Activated CD4-positive, alpha-beta memory T cell treated with anti-CD3 and anti-CD28 coated beads for 36 hours (primary cell): ENCODE measurements at regions of chr20 and their contacts with region 1.

Region 1: DNA sequence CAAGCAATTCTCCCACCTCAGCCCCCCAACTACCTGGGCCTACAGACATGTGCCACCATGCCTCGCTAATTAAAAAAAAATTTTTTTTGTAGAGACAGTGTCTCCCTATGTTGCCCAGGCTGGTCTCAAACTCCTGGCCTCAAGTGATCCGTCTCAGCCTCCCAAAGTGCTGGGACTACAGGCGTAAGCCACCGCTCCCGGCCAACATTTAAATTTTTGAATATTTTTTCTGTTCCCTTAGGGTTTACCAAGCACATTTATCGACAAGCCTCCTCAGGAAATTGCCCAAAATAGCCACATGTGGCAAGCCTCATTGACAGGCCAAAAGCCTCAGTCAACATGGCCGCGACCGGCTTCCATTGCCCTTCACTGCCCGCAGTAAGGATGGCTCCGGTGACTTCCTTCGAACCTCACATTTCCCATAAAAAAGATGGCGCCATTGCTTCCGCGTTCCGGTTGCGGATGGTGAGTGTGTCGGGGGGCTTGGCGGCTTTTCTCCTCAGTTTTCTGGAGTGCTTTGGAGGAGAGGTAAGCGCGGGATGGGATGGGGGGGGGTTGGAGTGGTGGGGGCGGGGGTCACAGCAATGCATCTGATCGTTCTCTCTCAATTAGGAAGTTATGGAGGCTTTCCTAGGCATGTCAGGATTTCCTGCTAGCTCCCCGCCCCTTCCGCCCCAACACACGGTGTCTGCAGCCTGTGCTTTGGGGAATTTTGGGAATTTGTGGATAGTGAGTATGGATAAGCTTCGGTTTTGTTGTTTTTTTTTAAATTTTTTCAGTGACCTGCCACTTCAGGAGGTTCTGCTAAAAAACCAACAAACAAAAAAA is at the start of gene SHLD1:
- DNase-seq: peak; percentile 88
- H3K4me3 Mint-ChIP-seq: peak within 1 kb of the TSS; percentile 90
- H3K27ac Mint-ChIP-seq: peak within 1 kb of the TSS; percentile 95
- H3K4me1 Mint-ChIP-seq: peaks cover 18% of the 10 kb centered on the region
- H3K27me3 Mint-ChIP-seq: no peaks in the 10 kb centered on the region
- total RNA-seq, gene SHLD1: 9.0 to 9.8 TPM

Region 2: GRCh38 chr20:5633751-5634365 is 116.3 kb before region 1 on chr20:
- CTCF ChIA-PET with region 1: no interaction called
- POLR2A ChIA-PET with region 1: no interaction called
- intact Hi-C with region 1: no loop called
- DNase-seq: no peak
- H3K4me3 Mint-ChIP-seq: no peak overlapping the region
- H3K27ac Mint-ChIP-seq: no peak overlapping the region
- H3K4me1 Mint-ChIP-seq: no peaks in the 10 kb centered on the region
- H3K27me3 Mint-ChIP-seq: no peaks in the 10 kb centered on the region

Region 3: DNA sequence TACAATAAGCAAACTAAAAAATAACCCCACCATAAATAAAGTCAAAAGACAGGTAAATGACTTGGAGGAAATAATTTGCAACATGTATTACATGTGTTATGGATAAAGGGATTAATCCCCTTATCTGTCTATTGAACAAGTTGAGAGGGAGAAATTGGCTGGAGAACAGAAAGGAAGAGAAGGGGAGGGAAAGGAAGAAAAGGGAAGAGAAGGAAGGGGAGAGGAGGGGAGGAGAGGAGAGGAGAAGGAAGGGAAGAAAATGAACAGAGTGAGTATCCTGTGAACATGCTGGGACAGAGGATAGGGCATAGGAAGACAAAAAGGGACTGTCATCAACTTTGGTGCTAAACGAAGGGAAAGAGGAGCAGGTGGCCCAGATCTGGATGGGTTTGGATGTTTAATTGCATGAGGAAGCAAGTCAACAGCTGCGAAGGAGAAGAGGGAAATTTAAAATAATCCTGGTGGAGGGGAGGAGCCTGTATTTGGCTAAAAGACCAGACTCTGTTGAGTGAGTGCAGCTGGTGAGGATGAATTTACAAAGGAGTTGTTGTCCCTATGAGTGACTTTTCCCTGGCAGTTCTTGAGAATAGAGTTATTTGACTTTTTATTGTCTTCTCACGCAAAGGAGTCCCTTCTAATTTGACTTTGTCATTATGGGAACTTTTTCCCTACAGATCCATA is 14.2 kb before region 1 on chr20:
- CTCF ChIA-PET with region 1: no interaction called
- POLR2A ChIA-PET with region 1: no interaction called
- intact Hi-C with region 1: loop called (anchors 2 kb)
- DNase-seq: no peak
- H3K4me3 Mint-ChIP-seq: no peak overlapping the region
- H3K27ac Mint-ChIP-seq: peak overlapping the region; percentile 43
- H3K4me1 Mint-ChIP-seq: peaks cover 29% of the 10 kb centered on the region
- H3K27me3 Mint-ChIP-seq: no peaks in the 10 kb centered on the region